Naive thymus-derived CD4-positive, alpha-beta T cell (primary cell): ENCODE measurements at regions of chr4 and their contacts with region 1.

Region 1: GRCh38 chr4:85147439-85148076 is 181.1 kb upstream of the WDFY3 start:
- DNase-seq: peak in 4 of 9 donors; percentile 5 to 22 (median 9)
- ATAC-seq: no peak
- H3K4me3 ChIP-seq: no peak overlapping the region
- H3K4me3 Mint-ChIP-seq: no peak overlapping the region
- H3K27ac ChIP-seq: no peak overlapping the region
- H3K27ac Mint-ChIP-seq: no peak overlapping the region
- H3K4me1 ChIP-seq: no peaks in the 10 kb centered on the region
- H3K4me1 Mint-ChIP-seq: no peaks in the 10 kb centered on the region
- H3K27me3 ChIP-seq: no peaks in the 10 kb centered on the region
- H3K27me3 Mint-ChIP-seq: peaks cover 0 to 12% (median 4%) of the 10 kb centered on the region in 5 donors

Region 2: GRCh38 chr4:85370430-85371032 is 223.0 kb after region 1 on chr4:
- CTCF ChIA-PET with region 1: no interaction called
- POLR2A ChIA-PET with region 1: no interaction called
- intact Hi-C with region 1: loop called in 1 of 2 experiments (anchors 1 kb)
- DNase-seq: no peak
- ATAC-seq: no peak
- H3K4me3 ChIP-seq: no peak overlapping the region
- H3K4me3 Mint-ChIP-seq: no peak overlapping the region
- H3K27ac ChIP-seq: no peak overlapping the region
- H3K27ac Mint-ChIP-seq: no peak overlapping the region
- H3K4me1 ChIP-seq: no peaks in the 10 kb centered on the region
- H3K4me1 Mint-ChIP-seq: no peaks in the 10 kb centered on the region
- H3K27me3 ChIP-seq: no peaks in the 10 kb centered on the region
- H3K27me3 Mint-ChIP-seq: no peaks in the 10 kb centered on the region

Region 3: GRCh38 chr4:85747882-85748491 is 600.4 kb after region 1 on chr4:
- CTCF ChIA-PET with region 1: no interaction called
- POLR2A ChIA-PET with region 1: no interaction called
- intact Hi-C with region 1: loop called in 1 of 2 experiments (anchors 2 kb)
- DNase-seq: peak in 1 of 9 donors; percentile 3
- ATAC-seq: peak; percentile 69
- H3K4me3 ChIP-seq: no peak overlapping the region
- H3K4me3 Mint-ChIP-seq: no peak overlapping the region
- H3K27ac ChIP-seq: no peak overlapping the region
- H3K27ac Mint-ChIP-seq: no peak overlapping the region
- H3K4me1 ChIP-seq: no peaks in the 10 kb centered on the region
- H3K4me1 Mint-ChIP-seq: no peaks in the 10 kb centered on the region
- H3K27me3 ChIP-seq: no peaks in the 10 kb centered on the region
- H3K27me3 Mint-ChIP-seq: no peaks in the 10 kb centered on the region

Region 4: DNA sequence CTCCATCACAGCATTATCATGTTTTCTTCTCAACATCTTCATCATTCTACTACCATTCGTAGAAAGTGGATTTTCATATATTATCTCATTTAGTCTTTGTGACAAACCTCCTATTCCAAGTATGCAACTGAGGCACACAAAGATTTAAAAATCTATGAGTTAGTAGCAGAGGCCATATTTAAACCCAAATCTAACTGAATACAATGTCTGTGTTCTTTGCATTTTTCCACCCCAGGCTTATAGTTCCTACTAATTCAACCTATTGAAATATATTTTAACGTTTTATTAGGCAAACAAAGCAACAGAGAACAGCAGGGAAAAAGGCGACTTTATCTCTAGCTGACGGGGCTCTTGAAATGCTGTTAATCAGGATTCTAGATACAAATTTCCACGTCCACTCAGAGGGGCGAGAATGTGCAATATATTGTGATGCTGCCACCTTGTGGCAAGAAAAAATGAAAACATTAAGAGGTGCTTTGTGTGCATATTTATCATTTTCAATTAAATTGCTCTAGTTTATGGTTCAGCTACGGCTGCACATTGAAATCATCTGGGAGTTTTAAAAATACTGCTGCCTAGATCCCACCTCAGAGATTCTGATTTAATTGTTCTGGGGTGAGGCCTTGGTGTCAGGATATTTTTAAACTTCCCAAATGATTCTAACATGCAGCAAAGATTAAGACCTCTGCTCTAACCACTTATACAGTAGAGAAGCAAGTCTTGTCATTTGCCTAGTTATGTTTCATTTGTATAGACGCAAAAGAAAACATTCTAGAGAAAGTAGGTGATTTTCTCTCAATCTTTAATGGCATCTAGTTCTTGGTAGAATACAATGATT is 896.4 kb after region 1 on chr4:
- CTCF ChIA-PET with region 1: no interaction called
- POLR2A ChIA-PET with region 1: no interaction called
- intact Hi-C with region 1: loop called (anchors 1 to 5 kb)
- DNase-seq: peak in 5 of 9 donors; percentile 1 to 19 (median 4)
- ATAC-seq: no peak
- H3K4me3 ChIP-seq: no peak overlapping the region
- H3K4me3 Mint-ChIP-seq: no peak overlapping the region
- H3K27ac ChIP-seq: no peak overlapping the region
- H3K27ac Mint-ChIP-seq: no peak overlapping the region
- H3K4me1 ChIP-seq: no peaks in the 10 kb centered on the region
- H3K4me1 Mint-ChIP-seq: no peaks in the 10 kb centered on the region
- H3K27me3 ChIP-seq: no peaks in the 10 kb centered on the region
- H3K27me3 Mint-ChIP-seq: no peaks in the 10 kb centered on the region